Activated T-helper 1 cell treated with anti-CD3 and anti-CD28 coated beads, Interleukin-12 subunit alpha, Interleukin-12 subunit beta, Interleukin-2, Interleukin-4 antibody, amounts not matched to agents 30 ng/mL and 10 ng/mL and 1 ng/mL, durations not matched to agents 14 hours and 24 hours and 36 hours (primary cell): ENCODE measurements at regions of chr12 and their contacts with region 1.

Region 1: DNA sequence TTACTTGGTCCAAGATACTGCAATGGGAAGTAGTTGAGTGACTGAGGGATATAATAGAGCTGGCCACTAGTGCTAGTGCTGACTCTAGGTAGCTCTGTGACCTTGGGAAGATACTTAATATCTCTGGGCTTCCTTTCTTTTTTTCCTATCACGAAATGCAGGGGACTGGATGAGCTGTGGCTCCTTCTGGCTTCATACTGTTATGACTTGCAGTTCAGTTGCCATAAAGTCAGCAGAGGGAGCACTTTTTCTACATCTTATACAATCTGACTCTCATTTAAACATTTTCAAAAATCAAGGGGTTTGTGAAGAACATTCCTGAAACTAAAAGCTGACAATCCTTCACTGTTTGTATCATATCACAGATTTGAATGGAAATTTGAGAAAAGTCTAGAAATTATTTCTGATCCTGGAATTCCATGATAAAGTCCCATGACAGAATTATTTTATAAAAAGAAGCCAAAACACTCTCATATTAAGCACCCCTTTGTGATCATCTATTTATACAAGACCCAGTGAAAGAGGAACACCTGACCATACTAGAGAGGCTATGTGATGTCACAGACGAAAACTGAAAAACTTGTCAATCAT is 5.4 kb downstream of the BHLHE41 start:
- DNase-seq: no peak
- H3K4me3 Mint-ChIP-seq: no peak overlapping the region
- H3K27ac Mint-ChIP-seq: no peak overlapping the region
- H3K4me1 Mint-ChIP-seq: peaks cover 12% of the 10 kb centered on the region
- H3K27me3 Mint-ChIP-seq: peaks cover 76% of the 10 kb centered on the region

Region 2: DNA sequence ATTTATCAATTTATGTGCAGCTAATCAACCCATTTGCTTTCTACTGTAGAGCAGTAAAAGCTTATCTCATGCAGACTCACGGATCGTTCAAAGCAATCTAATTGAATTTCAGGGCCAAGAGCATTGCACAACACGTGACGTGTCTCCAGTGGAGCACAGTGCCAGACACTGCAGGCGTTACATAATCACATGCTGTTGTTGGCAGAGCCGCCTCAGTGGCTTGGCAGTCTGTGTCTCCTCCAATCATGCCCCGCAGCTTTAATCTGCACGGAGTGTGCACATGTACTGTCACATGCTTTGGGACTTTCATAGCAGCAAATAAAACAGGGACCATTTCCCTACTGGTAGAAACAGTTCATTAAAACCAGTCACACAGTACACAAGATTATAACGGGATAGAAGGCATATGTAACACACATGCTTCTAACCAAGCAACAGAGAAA is 404.2 kb after region 1 on chr12:
- intact Hi-C with region 1: loop called (anchors 2 kb)
- DNase-seq: no peak
- H3K4me3 Mint-ChIP-seq: no peak overlapping the region
- H3K27ac Mint-ChIP-seq: no peak overlapping the region
- H3K4me1 Mint-ChIP-seq: peaks cover 14% of the 10 kb centered on the region
- H3K27me3 Mint-ChIP-seq: no peaks in the 10 kb centered on the region

Region 3: DNA sequence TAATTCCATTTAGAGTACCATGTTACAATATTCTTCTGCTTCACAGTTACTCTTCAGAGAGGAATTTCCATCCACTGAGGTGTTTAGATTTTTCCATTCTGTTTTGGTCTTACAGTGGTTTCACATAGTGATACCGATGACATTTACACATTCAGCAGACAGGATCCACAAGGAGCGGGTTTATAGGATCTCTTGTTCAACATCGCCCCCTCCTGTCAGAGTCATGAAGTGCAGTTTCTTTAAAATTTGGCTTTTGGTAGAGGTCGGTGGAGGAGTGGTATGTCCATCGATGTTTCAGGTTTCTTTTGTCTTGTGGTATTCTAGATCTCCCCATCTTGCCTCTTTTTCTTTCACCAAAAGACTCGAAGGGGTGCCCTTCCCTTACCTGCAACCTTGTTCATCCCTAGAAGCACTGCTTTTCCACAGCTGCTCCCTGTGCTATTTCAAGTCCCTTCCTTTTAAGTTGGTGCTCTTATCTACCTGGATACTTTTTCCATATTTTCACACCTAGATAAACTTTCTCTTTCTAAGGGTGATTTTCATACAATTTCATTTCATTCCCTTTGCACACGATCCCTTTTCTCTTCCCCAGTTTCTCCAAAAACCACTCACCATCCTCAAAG is 532.2 kb after region 1 on chr12:
- intact Hi-C with region 1: loop called (anchors 1 kb)
- DNase-seq: peak; percentile 14
- H3K4me3 Mint-ChIP-seq: no peak overlapping the region
- H3K27ac Mint-ChIP-seq: no peak overlapping the region
- H3K4me1 Mint-ChIP-seq: peaks cover 10% of the 10 kb centered on the region
- H3K27me3 Mint-ChIP-seq: no peaks in the 10 kb centered on the region

Region 4: GRCh38 chr12:26701604-26702215 is 582.2 kb after region 1 on chr12:
- intact Hi-C with region 1: loop called (anchors 5 kb)
- DNase-seq: no peak
- H3K4me3 Mint-ChIP-seq: no peak overlapping the region
- H3K27ac Mint-ChIP-seq: no peak overlapping the region
- H3K4me1 Mint-ChIP-seq: peaks cover 9% of the 10 kb centered on the region
- H3K27me3 Mint-ChIP-seq: no peaks in the 10 kb centered on the region